ENCODE measurements at regions of chr2 and their contacts with region 1.

Region 1: DNA sequence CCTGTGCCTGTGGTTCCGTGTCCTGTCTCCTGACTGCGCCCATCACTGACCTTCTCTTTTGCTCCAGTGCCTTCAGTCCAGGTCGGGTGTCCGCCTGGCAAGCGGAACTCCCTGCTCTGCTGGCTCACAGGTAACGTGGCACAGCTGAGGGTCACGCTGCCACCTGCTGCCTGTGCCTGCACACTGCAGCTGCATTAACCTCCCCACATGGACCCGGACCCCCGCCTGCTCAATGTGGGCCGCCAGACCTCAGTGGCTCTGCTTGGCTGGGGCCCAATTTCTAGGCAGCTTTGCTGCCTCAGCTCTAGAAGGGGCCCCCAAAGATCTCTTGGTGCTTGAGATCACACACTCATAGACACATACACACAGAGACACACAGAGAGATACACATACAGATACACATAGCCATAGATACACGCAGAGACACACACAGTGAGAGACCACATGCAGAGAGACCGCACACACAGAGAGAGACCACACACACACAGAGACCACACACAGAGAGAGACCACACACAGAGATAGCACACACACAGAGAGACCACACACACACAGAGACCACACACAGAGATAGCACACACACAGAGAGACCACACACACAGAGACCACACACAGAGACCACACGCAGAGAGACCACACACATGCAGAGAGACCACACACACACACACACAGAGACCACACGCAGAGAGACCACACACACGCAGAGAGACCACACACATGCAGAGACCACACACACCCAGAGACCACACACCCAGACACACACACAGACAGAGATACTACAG is 14.9 kb upstream of the CNNM3 start:
- DNase-seq: peak; percentile 65 to 75
- H3K4me3 ChIP-seq: no peak overlapping the region
- H3K4me3 Mint-ChIP-seq: no peak overlapping the region
- H3K27ac Mint-ChIP-seq: no peak overlapping the region
- H3K4me1 ChIP-seq: no peaks in the 10 kb centered on the region
- H3K4me1 Mint-ChIP-seq: peaks cover 1% of the 10 kb centered on the region
- H3K27me3 ChIP-seq: no peaks in the 10 kb centered on the region
- H3K27me3 Mint-ChIP-seq: no peaks in the 10 kb centered on the region
- CTCF ChIP-seq: peak; percentile 86 to 89

Region 2: GRCh38 chr2:96602330-96602823 is 198.8 kb before region 1 on chr2:
- CTCF ChIA-PET with region 1: no interaction called
- POLR2A ChIA-PET with region 1: no interaction called
- intact Hi-C with region 1: loop called (anchors 5 kb)
- DNase-seq: peak in 1 of 2 experiments; percentile 36
- H3K4me3 ChIP-seq: no peak overlapping the region
- H3K4me3 Mint-ChIP-seq: no peak overlapping the region
- H3K27ac Mint-ChIP-seq: no peak overlapping the region
- H3K4me1 ChIP-seq: no peaks in the 10 kb centered on the region
- H3K4me1 Mint-ChIP-seq: no peaks in the 10 kb centered on the region
- H3K27me3 ChIP-seq: no peaks in the 10 kb centered on the region
- H3K27me3 Mint-ChIP-seq: no peaks in the 10 kb centered on the region
- CTCF ChIP-seq: peak in 1 of 2 experiments; percentile 28

Measured in Caco-2 (cell line).